HEK293 (cell line): ENCODE measurements at regions of chr4 and their contacts with region 1.

Region 1: GRCh38 chr4:16916719-16917337 is 18.4 kb upstream of the LDB2 start:
- H3K4me3 ChIP-seq: no peak overlapping the region
- H3K27ac ChIP-seq: no peak overlapping the region
- H3K4me1 ChIP-seq: no peaks in the 10 kb centered on the region
- CTCF ChIP-seq: no peak

Region 2: DNA sequence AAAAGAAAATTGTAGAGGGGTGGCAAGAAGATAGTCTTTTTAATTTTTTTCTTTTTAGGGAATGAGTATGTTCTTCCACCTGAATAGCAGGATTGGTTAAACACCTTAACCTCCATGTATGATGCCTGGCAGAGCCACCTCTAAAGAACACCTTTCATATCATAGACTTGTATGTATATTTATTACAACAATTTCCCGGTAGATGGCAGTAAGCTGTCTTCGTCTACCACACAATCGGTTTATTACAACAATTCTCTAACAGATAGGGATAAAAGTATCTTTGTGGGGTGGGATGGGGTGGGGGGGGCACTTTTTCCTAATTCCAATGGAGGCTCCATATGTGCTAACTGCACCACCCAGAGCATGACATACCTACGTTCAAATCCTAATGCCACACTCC is 273.9 kb before region 1 on chr4:
- CTCF ChIA-PET with region 1: interaction called, 14 read pairs
- POLR2A ChIA-PET with region 1: no interaction called
- H3K4me3 ChIP-seq: no peak overlapping the region
- H3K27ac ChIP-seq: no peak overlapping the region
- H3K4me1 ChIP-seq: no peaks in the 10 kb centered on the region
- CTCF ChIP-seq: no peak

Region 3: GRCh38 chr4:16794816-16795445 is 121.9 kb before region 1 on chr4:
- CTCF ChIA-PET with region 1: interaction called, 14 read pairs
- POLR2A ChIA-PET with region 1: no interaction called
- H3K4me3 ChIP-seq: no peak overlapping the region
- H3K27ac ChIP-seq: no peak overlapping the region
- H3K4me1 ChIP-seq: no peaks in the 10 kb centered on the region
- CTCF ChIP-seq: no peak

Region 4: GRCh38 chr4:16995451-16995850 is 78.6 kb after region 1 on chr4:
- CTCF ChIA-PET with region 1: no interaction called
- POLR2A ChIA-PET with region 1: no interaction called
- H3K4me3 ChIP-seq: no peak overlapping the region
- H3K27ac ChIP-seq: no peak overlapping the region
- H3K4me1 ChIP-seq: no peaks in the 10 kb centered on the region
- CTCF ChIP-seq: no peak